ENCODE measurements at regions of chr21 and their contacts with region 1.

Region 1: DNA sequence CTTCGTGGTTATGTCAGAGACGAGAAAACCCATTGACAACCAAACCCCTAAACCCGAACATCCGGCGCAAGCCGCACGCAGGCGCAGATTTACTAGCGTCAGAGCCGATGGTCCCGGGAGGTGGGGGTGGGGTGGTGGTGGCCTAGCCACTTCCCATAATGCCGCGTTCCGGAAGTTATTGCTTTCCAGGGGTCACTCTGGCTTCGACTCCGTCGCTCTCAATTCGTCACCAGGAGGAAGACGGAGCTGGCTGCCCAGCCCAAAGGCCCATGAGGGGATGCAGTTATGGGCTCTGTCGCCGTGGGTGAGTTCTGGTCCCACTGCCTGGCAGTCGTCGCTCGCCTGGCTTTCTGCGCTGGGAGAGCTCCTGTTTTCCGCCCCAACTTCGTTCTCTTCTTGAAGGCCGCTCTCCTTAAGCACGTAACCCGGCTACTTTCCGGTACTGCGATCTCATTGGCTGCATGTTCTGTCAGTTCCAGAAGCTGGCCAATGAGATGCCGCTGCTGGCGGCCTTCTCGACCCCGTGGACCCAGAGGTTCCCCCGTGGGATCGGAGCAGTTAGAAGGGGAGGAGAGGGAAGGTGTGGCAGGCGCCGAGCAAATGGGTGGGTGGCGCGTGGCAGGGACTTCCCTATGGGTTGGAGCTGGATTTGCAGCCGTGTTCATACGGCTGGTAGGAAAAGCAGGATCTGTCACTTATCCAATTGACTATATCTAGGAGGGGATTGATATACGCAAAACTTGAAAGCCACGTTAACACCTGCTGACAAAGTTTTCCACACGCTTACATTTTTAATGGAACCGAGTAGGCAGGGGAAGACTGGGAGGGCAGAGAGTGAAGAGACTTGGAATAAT is at the start of gene USP16:
- DNase-seq: peak; percentile 95
- H3K4me3 Mint-ChIP-seq: peak within 1 kb of the TSS; percentile 88
- H3K27ac Mint-ChIP-seq: peak within 1 kb of the TSS; percentile 98
- H3K4me1 Mint-ChIP-seq: peaks cover 42% of the 10 kb centered on the region
- H3K27me3 Mint-ChIP-seq: no peaks in the 10 kb centered on the region
- total RNA-seq, gene USP16: 36.1 to 36.7 TPM

Region 2: GRCh38 chr21:28992526-28993292 is 32.0 kb before region 1 on chr21 and contains the start of gene LTN1:
- CTCF ChIA-PET with region 1: interaction called, 3 read pairs
- intact Hi-C with region 1: loop called (anchors 1 kb)
- DNase-seq: peak; percentile 100
- H3K4me3 Mint-ChIP-seq: peak within 1 kb of the TSS; percentile 99
- H3K27ac Mint-ChIP-seq: peak within 1 kb of the TSS; percentile 97
- H3K4me1 Mint-ChIP-seq: peaks cover 51% of the 10 kb centered on the region
- H3K27me3 Mint-ChIP-seq: no peaks in the 10 kb centered on the region
- total RNA-seq, gene LTN1: 18.5 to 21.2 TPM

Region 3: GRCh38 chr21:29002442-29003144 is 22.1 kb before region 1 on chr21:
- CTCF ChIA-PET with region 1: interaction called, 8 read pairs
- intact Hi-C with region 1: loop called (anchors 1 kb)
- DNase-seq: peak; percentile 96
- H3K4me3 Mint-ChIP-seq: peak overlapping the region; percentile 89
- H3K27ac Mint-ChIP-seq: peak overlapping the region; percentile 95
- H3K4me1 Mint-ChIP-seq: peaks cover 6% of the 10 kb centered on the region
- H3K27me3 Mint-ChIP-seq: no peaks in the 10 kb centered on the region

Region 4: DNA sequence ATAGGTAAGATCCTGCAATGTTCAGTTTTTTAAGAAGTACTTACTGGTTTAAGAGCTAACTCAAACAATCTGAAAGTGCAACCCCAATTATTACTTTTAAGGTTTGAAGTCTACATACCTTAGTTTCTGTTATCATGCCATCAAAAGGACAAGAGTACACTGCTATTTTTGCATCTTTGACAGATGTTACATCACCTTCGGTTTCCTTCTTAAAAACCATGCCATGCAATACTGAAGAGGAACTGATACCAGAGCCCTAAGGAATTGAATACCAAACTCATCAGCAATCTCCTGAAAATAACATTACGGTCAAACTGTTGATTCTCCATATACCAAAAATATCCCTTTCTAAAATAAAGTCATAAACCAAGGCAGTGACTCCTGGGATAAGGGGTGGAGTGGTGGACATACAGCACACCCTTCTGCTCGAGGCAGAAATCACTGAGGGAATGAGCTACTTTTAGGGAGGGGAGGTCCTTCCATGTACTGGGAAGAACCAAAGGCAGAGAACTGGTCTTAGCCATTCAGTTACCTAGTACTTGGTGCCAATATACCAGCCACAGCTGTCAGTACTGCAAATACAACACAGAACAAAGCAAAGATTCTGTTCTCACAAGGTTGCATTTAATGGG is 40.3 kb after region 1 on chr21:
- CTCF ChIA-PET with region 1: interaction called, 3 read pairs
- intact Hi-C with region 1: loop called (anchors 5 kb)
- DNase-seq: no peak
- H3K4me3 Mint-ChIP-seq: no peak overlapping the region
- H3K27ac Mint-ChIP-seq: peak overlapping the region; percentile 34
- H3K4me1 Mint-ChIP-seq: peaks cover 18% of the 10 kb centered on the region
- H3K27me3 Mint-ChIP-seq: no peaks in the 10 kb centered on the region

Region 5: GRCh38 chr21:29073222-29074006 is 48.7 kb after region 1 on chr21 and contains the start of gene CCT8:
- CTCF ChIA-PET with region 1: interaction called, 3 read pairs
- intact Hi-C with region 1: loop called (anchors 1 kb)
- DNase-seq: peak; percentile 99
- H3K4me3 Mint-ChIP-seq: peak within 1 kb of the TSS; percentile 94
- H3K27ac Mint-ChIP-seq: peak within 1 kb of the TSS; percentile 95
- H3K4me1 Mint-ChIP-seq: peaks cover 46% of the 10 kb centered on the region
- H3K27me3 Mint-ChIP-seq: no peaks in the 10 kb centered on the region
- total RNA-seq, gene CCT8: 482 to 515 TPM